ENCODE measurements at regions of chr6 and their contacts with region 1.

Region 1: DNA sequence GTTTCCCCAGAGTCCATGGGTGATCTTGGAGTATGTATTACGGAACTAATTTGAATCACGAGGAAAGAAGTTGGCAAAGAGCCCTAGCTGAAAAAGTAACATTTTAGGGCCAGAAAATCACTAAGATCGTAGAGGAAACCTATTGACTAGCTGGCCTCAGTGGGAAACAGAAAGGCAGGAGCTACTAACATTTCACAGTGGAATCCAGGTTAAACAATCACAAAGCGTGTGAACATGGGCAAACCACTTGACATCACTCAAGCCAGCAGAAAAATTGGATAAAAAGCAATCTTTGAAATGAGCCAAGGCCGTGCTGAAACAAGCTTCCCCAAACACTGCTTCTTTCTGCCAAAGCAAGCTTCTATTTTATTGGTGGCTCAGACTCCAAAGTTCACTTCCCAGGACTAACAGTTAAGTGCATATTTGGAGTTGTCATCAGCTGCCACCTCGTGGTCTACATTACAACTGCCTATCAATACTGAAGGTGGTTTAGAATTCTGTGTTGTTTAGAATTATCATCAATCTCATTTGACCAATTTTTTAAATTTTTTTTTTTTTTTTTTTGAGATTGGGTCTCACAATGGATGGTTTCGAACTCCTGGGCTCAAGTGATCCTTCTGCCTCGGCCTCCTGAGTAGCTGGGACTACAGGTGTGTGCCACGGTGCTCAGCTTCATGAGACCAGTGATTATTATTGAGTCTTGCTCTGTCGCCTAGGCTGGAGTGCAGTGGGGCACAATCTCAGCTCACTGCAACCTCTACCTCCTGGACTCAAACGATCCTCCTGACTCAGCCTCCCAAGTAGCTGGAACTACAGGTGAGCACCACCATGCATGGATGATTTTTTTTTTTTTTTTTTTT is 10.6 kb downstream of the RPS10 start:
- DNase-seq: peak; percentile 65
- ATAC-seq: peak; percentile 50
- H3K4me3 ChIP-seq: no peak overlapping the region
- H3K27ac ChIP-seq: no peak overlapping the region
- H3K4me1 ChIP-seq: no peaks in the 10 kb centered on the region
- H3K27me3 ChIP-seq: no peaks in the 10 kb centered on the region
- CTCF ChIP-seq: peak; percentile 63
- POLR2A ChIP-seq: 0 out of 2 replicates have a peak, but pooled peaks have one; percentile 17
- RAD21 ChIP-seq: peak; percentile 65

Region 2: GRCh38 chr6:34161857-34162515 is 253.2 kb before region 1 on chr6:
- CTCF ChIA-PET with region 1: interaction called, 12 read pairs
- POLR2A ChIA-PET with region 1: no interaction called
- dilution Hi-C with region 1: no loop called
- in situ Hi-C with region 1: no loop called
- intact Hi-C with region 1: loop called (anchors 1 kb)
- DNase-seq: no peak
- ATAC-seq: no peak
- H3K4me3 ChIP-seq: no peak overlapping the region
- H3K27ac ChIP-seq: no peak overlapping the region
- H3K4me1 ChIP-seq: no peaks in the 10 kb centered on the region
- H3K27me3 ChIP-seq: peaks cover 7% of the 10 kb centered on the region
- CTCF ChIP-seq: no peak
- POLR2A ChIP-seq: no peak
- RAD21 ChIP-seq: no peak

Region 3: DNA sequence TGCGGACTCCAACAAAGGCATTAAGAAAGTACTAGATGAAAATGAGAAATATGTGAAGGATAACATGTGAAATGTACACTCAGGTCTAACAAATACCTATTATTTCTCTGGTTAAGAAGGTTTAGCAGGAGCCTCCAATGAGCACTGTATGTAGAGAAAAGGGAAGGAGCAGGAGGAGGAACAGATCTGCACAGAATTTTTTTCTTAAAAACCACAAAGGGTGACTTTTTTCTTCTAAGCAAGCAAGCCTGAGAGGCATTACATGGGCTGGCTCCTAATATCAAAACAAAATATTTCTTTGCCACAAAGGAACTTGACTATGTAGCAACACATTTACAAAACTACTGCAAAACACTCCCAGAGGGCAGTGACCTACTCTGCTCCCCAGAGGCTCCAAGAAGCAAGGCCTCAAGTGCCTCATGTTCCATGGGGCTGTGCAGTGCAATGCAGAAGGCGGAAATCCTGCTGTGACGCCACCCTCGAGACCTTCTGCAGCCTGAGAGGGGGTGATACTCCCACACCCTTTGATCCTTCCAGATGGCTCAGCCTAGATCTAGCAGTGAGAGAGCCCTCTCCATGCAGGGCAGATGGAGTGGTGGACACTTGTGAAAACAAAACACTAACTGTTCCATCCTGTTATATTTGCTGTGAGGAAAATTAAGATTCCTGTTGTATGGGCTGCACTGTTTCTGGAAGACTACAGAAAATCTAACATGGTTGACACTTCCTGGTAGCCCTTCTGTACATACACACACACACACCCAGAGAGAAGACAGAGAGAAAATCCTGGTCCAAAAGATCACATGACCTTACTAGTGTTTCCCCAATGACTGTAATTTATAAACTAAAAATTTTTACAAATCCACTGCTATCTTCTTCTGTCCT is 130.4 kb before region 1 on chr6:
- CTCF ChIA-PET with region 1: no interaction called
- POLR2A ChIA-PET with region 1: interaction called, 12 read pairs
- dilution Hi-C with region 1: no loop called
- in situ Hi-C with region 1: no loop called
- intact Hi-C with region 1: no loop called
- DNase-seq: peak; percentile 73
- ATAC-seq: peak; percentile 91
- H3K4me3 ChIP-seq: no peak overlapping the region
- H3K27ac ChIP-seq: peak overlapping the region; percentile 48; the same call in 1 of the 2 replicates
- H3K4me1 ChIP-seq: peaks cover 10% of the 10 kb centered on the region
- H3K27me3 ChIP-seq: no peaks in the 10 kb centered on the region
- CTCF ChIP-seq: no peak
- POLR2A ChIP-seq: no peak
- RAD21 ChIP-seq: no peak

Region 4: DNA sequence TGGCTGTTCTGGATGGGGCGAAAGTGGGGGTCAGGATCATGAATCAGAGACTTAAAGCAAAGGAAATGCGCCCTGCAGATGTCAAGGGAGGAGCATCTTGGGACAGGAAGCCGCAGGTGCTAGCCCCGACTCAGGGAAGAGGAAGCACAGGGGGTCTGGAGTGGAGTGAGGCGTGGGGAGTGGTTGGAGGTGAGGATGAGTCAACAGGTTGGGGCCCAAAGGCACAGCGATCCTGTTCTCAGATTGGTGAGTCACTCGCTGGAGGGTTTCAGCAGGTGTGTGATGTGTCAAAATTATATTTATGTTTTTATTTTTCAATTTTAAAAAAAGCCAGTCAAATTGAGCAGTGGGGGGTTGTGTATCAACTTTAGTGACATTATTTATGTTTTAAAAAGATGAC is 69.7 kb after region 1 on chr6:
- CTCF ChIA-PET with region 1: no interaction called
- POLR2A ChIA-PET with region 1: no interaction called
- dilution Hi-C with region 1: no loop called
- in situ Hi-C with region 1: no loop called
- intact Hi-C with region 1: no loop called
- DNase-seq: no peak
- ATAC-seq: no peak
- H3K4me3 ChIP-seq: no peak overlapping the region
- H3K27ac ChIP-seq: no peak overlapping the region
- H3K4me1 ChIP-seq: no peaks in the 10 kb centered on the region
- H3K27me3 ChIP-seq: peaks cover 16% of the 10 kb centered on the region
- CTCF ChIP-seq: no peak
- POLR2A ChIP-seq: no peak
- RAD21 ChIP-seq: no peak

Region 5: DNA sequence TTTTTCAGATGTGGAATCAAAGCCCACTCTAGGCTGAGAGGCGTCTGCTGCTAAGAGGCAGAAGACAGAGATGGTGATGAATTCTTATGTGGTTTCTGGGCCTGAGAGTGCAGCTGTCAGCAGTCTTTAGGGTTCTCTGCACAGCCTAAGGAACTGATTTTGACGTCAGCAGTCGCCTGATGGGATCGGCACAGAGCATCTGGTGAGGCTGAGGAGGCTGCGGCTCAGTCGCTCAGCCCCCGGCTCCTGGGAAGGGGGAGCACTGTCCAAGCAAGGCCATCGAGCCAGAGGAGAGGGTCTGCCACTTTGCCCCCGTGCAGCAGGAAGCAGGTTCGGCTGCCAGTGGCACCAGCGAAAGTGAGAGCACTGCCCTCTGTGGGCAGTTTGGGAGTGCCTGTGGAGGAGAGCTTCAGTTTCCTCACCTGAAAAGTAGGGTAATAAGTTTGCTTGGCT is 633.4 kb after region 1 on chr6:
- CTCF ChIA-PET with region 1: no interaction called
- POLR2A ChIA-PET with region 1: interaction called, 12 read pairs
- dilution Hi-C with region 1: no loop called
- in situ Hi-C with region 1: no loop called
- intact Hi-C with region 1: no loop called
- DNase-seq: peak; percentile 94
- ATAC-seq: peak; percentile 34
- H3K4me3 ChIP-seq: no peak overlapping the region
- H3K27ac ChIP-seq: peak overlapping the region; percentile 79; the same call in 1 of the 2 replicates
- H3K4me1 ChIP-seq: peaks cover 41% of the 10 kb centered on the region
- H3K27me3 ChIP-seq: no peaks in the 10 kb centered on the region
- CTCF ChIP-seq: peak; percentile 21; the same call in 1 of the 2 replicates
- POLR2A ChIP-seq: no peak
- RAD21 ChIP-seq: no peak